Breast epithelium (tissue), 4 donors: ENCODE measurements at regions of chr11 and their contacts with region 1.

Region 1: DNA sequence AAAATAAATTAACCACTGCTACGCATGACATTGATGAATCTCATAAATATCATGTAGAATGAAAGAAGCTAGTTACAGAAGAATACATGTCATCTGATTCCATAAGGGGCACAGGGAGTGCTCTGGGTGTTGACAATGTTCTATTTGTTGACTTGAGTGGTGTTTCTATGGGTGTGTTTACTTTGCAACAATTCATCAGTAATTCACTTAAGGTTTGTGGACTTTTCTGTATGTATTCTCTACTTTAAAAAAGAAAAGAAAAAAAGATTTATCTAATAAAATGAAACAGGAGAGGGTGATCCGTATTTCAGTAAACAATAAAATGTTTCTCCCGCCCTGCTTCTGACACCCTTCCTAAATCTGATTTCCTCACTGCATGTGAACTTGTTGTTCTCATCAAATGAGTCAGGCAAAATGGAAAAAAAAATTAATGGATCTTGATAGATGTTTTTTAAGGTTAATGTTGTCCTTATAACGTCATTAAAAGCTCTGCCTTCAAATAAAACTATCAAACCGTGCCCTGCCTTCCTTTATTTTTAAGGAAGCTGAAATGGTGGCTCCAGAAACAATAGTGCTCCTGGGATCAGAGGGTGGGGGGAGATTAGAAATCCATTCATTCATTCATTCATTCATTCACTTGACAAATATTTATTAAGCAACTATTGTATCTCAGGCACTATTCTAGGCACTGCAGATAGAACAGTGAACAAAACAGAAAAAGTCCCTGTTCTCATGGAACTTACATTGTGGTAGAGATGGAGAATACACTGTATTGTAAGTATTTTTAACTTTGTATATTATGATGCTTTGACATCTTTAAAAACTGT is 77.1 kb upstream of the CD44 start:
- DNase-seq: no peak
- H3K4me3 ChIP-seq: no peak overlapping the region
- H3K27ac ChIP-seq: no peak overlapping the region
- H3K4me1 ChIP-seq: no peaks in the 10 kb centered on the region
- H3K27me3 ChIP-seq: no peaks in the 10 kb centered on the region
- CTCF ChIP-seq: no peak
- POLR2A ChIP-seq: no peak

Region 2: DNA sequence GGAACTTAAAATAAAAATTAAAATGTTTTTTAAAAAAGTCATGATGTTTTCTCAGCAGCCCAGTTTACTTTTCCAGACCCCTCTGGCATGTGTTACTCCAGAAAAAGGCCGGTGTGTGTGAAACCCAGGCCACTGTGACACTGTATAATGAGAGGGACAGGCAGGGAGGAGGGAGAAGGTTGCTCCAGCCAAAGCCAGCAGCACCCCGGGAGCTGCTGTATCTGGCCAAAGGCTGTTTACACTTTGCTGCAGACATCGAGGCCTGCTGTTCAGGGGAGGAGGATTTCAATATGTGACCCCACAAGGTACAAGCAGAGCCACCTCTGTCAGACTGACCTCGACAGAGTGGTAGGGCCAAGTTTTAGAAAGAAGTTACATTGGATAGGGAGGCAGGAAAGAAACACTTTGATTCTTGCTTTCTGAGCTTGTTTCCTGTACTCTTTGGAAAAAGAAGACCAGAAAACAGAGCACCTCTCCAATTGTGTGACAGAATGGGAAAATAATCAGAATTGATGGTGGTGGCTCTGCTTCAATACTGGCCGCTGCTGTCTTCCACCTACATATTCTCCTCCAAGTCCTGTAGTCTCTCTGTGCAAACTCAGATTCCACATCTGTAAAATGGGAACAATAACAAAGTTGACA is 36.1 kb after region 1 on chr11:
- intact Hi-C with region 1: loop called (anchors 2 kb)
- DNase-seq: no peak
- H3K4me3 ChIP-seq: no peak overlapping the region
- H3K27ac ChIP-seq: peak overlapping the region in 1 of 2 donors; percentile 64
- H3K4me1 ChIP-seq: no peaks in the 10 kb centered on the region
- H3K27me3 ChIP-seq: no peaks in the 10 kb centered on the region
- CTCF ChIP-seq: no peak
- POLR2A ChIP-seq: no peak